GM12878 (cell line): ENCODE measurements at regions of chr4 and their contacts with region 1.

Region 1: GRCh38 chr4:36325499-36325898 is 44.1 kb downstream of the DTHD1 start:
- DNase-seq: peak; percentile 59
- ATAC-seq: peak; percentile 92
- H3K4me3 ChIP-seq: no peak overlapping the region
- H3K27ac ChIP-seq: peak overlapping the region; percentile 93
- H3K4me1 ChIP-seq: peaks cover 57% of the 10 kb centered on the region
- H3K27me3 ChIP-seq: no peaks in the 10 kb centered on the region
- CTCF ChIP-seq: no peak
- EP300 ChIP-seq: 0 out of 4 replicates have a peak, but pooled peaks of 1 of the 2 experiments have one; percentile 16
- POLR2A ChIP-seq: no peak
- RAD21 ChIP-seq: no peak

Region 2: DNA sequence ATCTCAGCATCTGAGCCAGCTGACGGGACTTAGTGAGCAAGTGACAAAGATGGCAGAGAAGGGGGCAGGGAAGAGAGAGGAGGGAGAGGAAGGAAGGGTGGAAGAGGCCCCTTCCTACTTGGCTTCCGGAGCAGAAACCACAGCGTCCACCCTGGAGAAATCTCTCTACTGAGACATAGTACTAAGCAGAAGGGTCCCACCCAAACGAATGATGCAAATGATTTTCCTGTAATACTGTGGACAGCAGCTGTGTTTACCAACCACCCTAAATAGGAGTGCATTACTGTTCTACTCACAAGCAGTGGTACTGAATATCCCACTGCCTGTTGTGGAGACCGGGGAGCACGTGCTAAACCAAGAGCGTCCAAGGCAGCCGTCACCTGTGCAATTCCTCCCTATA is 14.7 kb before region 1 on chr4:
- CTCF ChIA-PET with region 1: interaction called, 10 read pairs
- POLR2A ChIA-PET with region 1: no interaction called
- RAD21 ChIA-PET with region 1: no interaction called
- SMC1A ChIA-PET with region 1: interaction called, 19 read pairs
- in situ Hi-C with region 1: no loop called
- intact Hi-C with region 1: no loop called
- DNase-seq: no peak
- ATAC-seq: peak; percentile 70
- H3K4me3 ChIP-seq: no peak overlapping the region
- H3K27ac ChIP-seq: peak overlapping the region; percentile 13
- H3K4me1 ChIP-seq: peaks cover 9% of the 10 kb centered on the region
- H3K27me3 ChIP-seq: no peaks in the 10 kb centered on the region
- CTCF ChIP-seq: no peak
- EP300 ChIP-seq: no peak
- POLR2A ChIP-seq: no peak
- RAD21 ChIP-seq: no peak